ENCODE measurements at regions of chr3 and their contacts with region 1.

Region 1: DNA sequence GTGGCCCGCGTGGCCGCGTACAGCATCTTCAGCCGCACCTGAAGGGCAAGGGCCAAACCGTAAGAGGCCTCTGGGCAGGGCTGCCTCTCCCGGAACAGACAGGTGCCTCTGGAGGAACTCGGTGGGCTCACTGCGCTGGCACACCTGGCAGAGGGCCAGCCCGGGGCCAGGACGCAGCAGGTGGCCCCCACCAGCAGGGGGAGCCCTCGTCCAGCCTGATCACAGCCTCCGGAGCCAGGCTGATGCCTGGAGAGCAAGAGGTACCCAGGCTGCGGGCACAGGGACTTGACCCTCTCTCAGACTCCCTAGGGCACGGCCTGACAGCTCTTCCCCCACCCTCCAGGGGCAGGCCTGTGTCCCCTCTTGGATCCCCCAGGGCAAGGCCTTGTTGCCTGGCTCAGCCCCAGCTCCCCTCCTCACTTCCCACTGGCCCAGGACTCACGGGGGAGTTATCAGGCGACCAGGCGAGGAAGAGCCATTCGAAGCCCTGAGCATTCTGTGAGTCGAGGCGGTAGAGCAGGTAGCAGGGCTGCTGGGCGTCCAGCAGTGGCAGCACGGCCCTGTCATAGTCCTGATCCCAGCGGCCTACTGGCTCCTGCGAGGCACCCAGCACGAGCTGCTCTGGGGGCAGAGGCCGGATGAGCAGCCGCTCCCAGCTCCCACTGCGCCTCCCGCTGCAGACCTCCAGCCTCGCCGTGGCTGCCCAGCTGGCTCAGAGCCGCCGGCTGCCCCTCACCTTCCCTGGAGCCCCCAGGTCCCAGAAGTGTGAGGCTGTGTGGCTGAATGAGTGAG is 6.3 kb upstream of the TLR9 start:
- DNase-seq: peak; percentile 92

Region 2: GRCh38 chr3:52278510-52279069 is 46.9 kb after region 1 on chr3 and contains the start of gene WDR82:
- intact Hi-C with region 1: loop called (anchors 2 kb)
- DNase-seq: peak; percentile 99
- total RNA-seq, gene WDR82: 69.7 TPM

Region 3: GRCh38 chr3:52339612-52340011 is 107.9 kb after region 1 on chr3:
- intact Hi-C with region 1: loop called (anchors 2 kb)
- DNase-seq: no peak

Measured in cardiac septum (tissue), 1 donor.